CD4-positive, alpha-beta memory T cell (primary cell): ENCODE measurements at regions of chr12 and their contacts with region 1.

Region 1: DNA sequence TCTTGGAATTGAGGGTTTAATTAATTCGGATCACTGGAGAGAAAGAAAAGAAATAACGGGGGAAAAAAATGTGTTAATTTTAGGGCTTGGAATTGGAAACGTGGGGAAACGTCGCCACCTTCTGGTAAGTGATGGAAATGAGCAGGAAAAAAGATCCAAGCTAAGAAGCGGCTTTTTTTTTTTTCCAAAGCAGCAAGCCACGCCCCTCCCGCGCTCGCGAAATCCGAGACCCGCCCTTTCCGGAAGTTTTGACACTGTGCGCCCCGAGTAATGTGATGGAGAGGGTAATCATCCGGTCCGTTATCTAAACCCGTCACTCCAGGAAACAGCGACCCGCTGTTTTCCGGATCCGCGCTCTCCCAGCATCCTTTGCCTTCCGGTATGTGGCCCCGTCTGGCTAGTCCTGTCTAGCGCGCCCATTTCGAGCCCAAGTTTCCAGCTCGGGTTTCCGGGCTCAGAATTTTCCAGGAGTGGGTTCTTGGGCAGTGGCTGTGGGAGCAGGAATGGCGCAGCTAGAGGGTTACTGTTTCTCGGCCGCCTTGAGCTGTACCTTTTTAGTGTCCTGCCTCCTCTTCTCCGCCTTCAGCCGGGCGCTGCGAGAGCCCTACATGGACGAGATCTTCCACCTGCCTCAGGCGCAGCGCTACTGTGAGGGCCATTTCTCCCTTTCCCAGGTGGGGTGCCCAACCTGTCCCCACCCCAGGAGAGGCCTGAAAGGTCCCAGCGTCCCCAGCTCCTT is at the start of gene ALG10B:
- DNase-seq: peak; percentile 92 to 95 (median 94)
- H3K4me3 ChIP-seq: peak within 1 kb of the TSS; percentile 73 to 90
- H3K4me3 Mint-ChIP-seq: peak within 1 kb of the TSS; percentile 93 to 97 (median 94)
- H3K27ac ChIP-seq: peak within 1 kb of the TSS; percentile 79
- H3K27ac Mint-ChIP-seq: peak within 1 kb of the TSS; percentile 97 to 99 (median 98)
- H3K4me1 ChIP-seq: peaks cover 16% of the 10 kb centered on the region
- H3K4me1 Mint-ChIP-seq: peaks cover 19 to 34% (median 27%) of the 10 kb centered on the region in 4 donors
- H3K27me3 ChIP-seq: no peaks in the 10 kb centered on the region
- H3K27me3 Mint-ChIP-seq: no peaks in the 10 kb centered on the region
- total RNA-seq, gene ALG10B: 12.1 to 12.5 TPM

Region 2: GRCh38 chr12:38138225-38139221 is 178.0 kb before region 1 on chr12:
- CTCF ChIA-PET with region 1: interaction called, 45 read pairs
- POLR2A ChIA-PET with region 1: no interaction called
- intact Hi-C with region 1: loop called (anchors 1 kb)
- DNase-seq: peak in 4 of 5 donors; percentile 50 to 65 (median 54)
- H3K4me3 ChIP-seq: peak overlapping the region in 1 of 2 donors; percentile 44
- H3K4me3 Mint-ChIP-seq: peak overlapping the region; percentile 51 to 88 (median 81)
- H3K27ac ChIP-seq: no peak overlapping the region
- H3K27ac Mint-ChIP-seq: peak overlapping the region in 4 of 7 donors; percentile 1 to 74 (median 42)
- H3K4me1 ChIP-seq: peaks cover 5% of the 10 kb centered on the region
- H3K4me1 Mint-ChIP-seq: peaks cover 5 to 14% (median 8%) of the 10 kb centered on the region in 4 donors
- H3K27me3 ChIP-seq: no peaks in the 10 kb centered on the region
- H3K27me3 Mint-ChIP-seq: peaks cover 4 to 10% of the 10 kb centered on the region in 2 donors

Region 3: GRCh38 chr12:38555620-38556596 is 239.3 kb after region 1 on chr12:
- CTCF ChIA-PET with region 1: no interaction called
- POLR2A ChIA-PET with region 1: no interaction called
- intact Hi-C with region 1: no loop called
- DNase-seq: no peak
- H3K4me3 ChIP-seq: no peak overlapping the region
- H3K4me3 Mint-ChIP-seq: no peak overlapping the region
- H3K27ac ChIP-seq: no peak overlapping the region
- H3K27ac Mint-ChIP-seq: no peak overlapping the region
- H3K4me1 ChIP-seq: no peaks in the 10 kb centered on the region
- H3K4me1 Mint-ChIP-seq: no peaks in the 10 kb centered on the region
- H3K27me3 ChIP-seq: no peaks in the 10 kb centered on the region
- H3K27me3 Mint-ChIP-seq: no peaks in the 10 kb centered on the region